ENCODE measurements at regions of chr22 and their contacts with region 1.

Region 1: DNA sequence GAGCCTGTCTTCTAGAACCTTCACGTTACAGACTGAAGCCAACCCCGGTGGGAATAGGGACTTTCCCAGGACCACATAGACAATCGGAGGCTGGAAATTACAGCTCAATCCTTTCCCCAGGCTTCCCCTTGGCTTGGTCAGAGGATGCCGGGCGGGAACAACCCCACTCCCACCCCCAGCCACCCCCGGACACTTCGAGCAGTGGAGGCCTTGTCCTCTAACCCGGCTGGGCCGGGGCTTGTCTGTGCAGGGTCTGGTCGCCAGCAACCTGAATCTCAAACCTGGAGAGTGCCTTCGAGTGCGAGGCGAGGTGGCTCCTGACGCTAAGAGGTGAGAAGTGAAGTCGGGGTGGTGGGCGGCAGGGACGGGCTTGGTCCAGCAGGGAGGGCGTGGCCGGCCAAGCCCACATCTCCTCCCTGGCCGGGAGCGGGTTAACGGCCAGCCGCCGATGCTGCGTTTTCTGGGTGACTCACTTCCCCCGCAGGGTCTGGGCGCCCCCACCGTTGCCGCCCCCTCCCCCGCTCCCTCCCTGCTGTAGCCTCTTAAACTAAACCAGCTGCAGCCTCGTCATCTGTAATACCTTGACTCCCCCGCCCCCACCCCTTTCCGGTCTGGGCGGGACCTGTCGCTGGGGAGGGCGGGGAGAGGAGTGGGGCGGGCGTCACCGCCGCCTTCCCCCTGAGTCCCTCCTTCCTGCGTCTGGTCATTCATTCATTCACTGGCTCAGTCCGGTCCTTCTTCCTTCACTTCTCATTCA is 1.5 kb downstream of the LGALS1 start:
- DNase-seq: peak; percentile 95
- H3K4me3 ChIP-seq: peak overlapping the region; percentile 63
- H3K27ac ChIP-seq: peak overlapping the region; percentile 80
- H3K4me1 ChIP-seq: peaks cover 49% of the 10 kb centered on the region
- CTCF ChIP-seq: no peak

Region 2: DNA sequence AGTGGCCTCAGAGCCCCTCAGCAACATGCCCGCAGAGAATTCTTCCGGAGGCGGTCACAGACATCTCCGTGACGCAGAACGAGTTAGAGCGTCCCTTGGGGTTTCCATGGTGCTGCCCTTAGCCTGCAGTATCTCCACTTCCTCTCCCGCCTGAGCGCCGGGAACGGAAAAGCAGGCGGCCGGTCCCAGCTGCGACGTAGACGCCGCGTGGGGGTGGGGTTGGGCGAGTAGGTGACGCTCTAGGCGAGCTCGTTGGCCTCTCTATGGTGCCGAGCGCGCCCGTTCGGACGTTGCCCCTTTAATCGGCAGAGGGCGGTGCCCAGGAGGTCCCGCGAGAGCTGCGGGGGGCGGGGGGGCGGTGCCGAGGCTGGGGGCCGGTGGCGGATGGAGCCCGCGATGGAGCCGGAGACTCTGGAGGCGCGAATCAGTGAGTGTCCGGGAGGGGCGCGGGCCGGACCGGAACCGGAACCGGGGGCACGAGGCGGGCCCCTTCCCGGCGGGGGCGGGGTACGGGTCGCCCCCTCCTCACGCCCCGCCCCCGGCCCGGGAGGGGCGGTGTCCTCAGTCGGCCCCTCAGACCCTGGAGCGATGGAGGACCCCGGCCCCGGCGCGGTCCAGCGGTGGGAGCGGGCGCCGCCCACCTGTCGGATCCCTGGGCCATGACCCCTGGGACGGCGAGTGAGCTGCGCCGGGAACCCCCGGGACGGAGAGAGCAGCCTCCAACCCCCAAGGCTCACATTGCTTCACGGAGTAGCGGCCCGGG is 68.3 kb before region 1 on chr22 and contains the start of gene GGA1:
- CTCF ChIA-PET with region 1: no interaction called
- POLR2A ChIA-PET with region 1: no interaction called
- intact Hi-C with region 1: loop called (anchors 5 kb)
- DNase-seq: peak; percentile 99
- H3K4me3 ChIP-seq: peak within 1 kb of the TSS; percentile 77
- H3K27ac ChIP-seq: peak within 1 kb of the TSS; percentile 90
- H3K4me1 ChIP-seq: peaks cover 40% of the 10 kb centered on the region
- CTCF ChIP-seq: no peak
- total RNA-seq, gene GGA1: 119 and 127 TPM in 2 replicates

Region 3: DNA sequence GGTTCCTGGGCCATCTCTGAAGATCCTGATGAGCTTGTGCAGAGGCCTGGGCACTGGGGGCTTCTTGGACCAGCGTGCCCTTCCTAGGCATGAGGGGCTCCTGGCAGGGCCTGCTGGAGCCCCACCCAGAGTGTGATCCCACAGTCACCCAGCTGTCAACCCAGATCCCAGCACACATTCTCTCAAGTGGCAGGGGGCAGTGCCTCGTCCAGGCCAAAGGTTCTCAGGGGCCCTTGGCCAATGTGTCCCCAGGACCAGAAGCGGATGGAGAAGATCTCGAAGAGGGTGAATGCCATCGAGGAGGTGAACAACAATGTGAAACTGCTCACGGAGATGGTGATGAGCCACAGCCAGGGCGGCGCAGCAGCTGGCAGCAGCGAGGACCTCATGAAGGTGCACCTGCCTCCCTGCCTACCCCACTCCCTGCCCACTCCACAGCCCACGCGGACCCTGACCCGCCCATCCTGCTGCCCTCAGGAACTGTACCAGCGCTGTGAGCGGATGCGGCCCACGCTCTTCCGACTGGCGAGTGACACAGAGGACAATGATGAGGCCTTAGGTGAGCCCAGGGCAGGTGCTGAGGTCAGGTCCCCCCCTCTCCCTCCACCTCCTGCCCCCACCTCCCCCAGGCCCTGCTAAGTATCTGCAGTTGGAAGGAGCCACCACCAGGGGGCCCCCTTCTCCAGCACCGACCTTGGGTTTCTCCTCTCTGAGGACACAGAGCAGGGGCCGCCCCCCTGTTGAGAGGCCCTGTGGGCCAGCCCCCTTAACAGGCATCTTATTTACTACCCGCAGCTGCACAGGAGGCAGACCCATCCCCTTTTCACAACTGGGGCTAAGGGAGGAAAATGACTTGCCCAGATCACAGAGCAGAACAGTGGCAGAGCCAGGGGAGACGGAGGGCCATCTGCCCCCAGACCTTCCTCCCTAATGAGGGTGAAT is 53.6 kb before region 1 on chr22:
- CTCF ChIA-PET with region 1: no interaction called
- POLR2A ChIA-PET with region 1: interaction called, 4 read pairs
- intact Hi-C with region 1: loop called (anchors 1 kb)
- DNase-seq: peak; percentile 79
- H3K4me3 ChIP-seq: no peak overlapping the region
- H3K27ac ChIP-seq: peak overlapping the region; percentile 38
- H3K4me1 ChIP-seq: peaks cover 48% of the 10 kb centered on the region
- CTCF ChIP-seq: peak; percentile 93

Region 4: DNA sequence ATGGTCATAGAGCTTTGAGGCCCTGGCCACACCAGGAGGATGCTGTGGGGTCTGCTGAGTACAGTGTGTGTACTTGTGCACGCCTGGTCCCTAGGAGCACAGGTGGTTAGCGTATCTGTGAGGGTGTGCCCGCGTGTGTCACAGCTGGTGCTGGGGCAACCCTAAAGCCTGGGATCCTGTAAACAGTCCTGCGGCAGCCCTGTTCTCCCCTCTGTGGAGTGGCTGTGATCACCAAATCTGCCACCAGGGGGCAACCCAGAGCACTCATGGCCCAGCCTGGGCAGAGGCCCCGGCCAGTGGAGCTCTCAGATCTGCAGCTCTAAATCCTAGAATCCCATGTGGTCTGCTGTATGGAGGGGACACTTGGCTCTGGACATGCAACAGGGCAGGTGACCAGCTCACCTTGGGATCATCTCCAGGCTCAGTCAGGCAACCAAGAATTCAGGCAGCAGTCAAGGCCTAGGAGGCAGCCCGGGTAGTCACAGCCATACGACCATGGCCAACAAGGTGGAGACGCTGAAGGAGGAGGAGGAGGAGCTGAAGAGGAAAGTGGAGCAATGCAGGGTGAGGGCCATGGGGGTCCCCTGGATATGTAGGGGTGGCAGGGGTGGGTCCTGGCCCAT is 33.6 kb before region 1 on chr22:
- CTCF ChIA-PET with region 1: interaction called, 16 read pairs
- POLR2A ChIA-PET with region 1: interaction called, 3 read pairs
- intact Hi-C with region 1: loop called (anchors 1 kb)
- DNase-seq: peak; percentile 79
- H3K4me3 ChIP-seq: no peak overlapping the region
- H3K27ac ChIP-seq: no peak overlapping the region
- H3K4me1 ChIP-seq: peaks cover 28% of the 10 kb centered on the region
- CTCF ChIP-seq: peak; percentile 91

Region 5: GRCh38 chr22:37658133-37659065 is 18.5 kb before region 1 on chr22 and contains the start of gene PDXP:
- CTCF ChIA-PET with region 1: interaction called, 3 read pairs
- POLR2A ChIA-PET with region 1: interaction called, 5 read pairs
- intact Hi-C with region 1: loop called (anchors 1 kb)
- DNase-seq: peak; percentile 100
- H3K4me3 ChIP-seq: peak within 1 kb of the TSS; percentile 90
- H3K27ac ChIP-seq: peak within 1 kb of the TSS; percentile 70
- H3K4me1 ChIP-seq: peaks cover 32% of the 10 kb centered on the region
- CTCF ChIP-seq: no peak
- total RNA-seq, gene PDXP: 50.0 and 61.2 TPM in 2 replicates

Measured in OCI-LY7 (cell line).